ENCODE measurements at regions of chr16 and their contacts with region 1.

Region 1: GRCh38 chr16:67883872-67884261 is 818 bp upstream of the NRN1L start:
- DNase-seq: peak; percentile 62
- H3K4me3 ChIP-seq: no peak overlapping the region
- H3K27ac ChIP-seq: no peak overlapping the region
- H3K4me1 ChIP-seq: no peaks in the 10 kb centered on the region
- CTCF ChIP-seq: peak; percentile 92

Region 2: GRCh38 chr16:68064791-68065365 is 181.0 kb after region 1 on chr16:
- CTCF ChIA-PET with region 1: no interaction called
- POLR2A ChIA-PET with region 1: no interaction called
- intact Hi-C with region 1: loop called (anchors 5 kb)
- DNase-seq: peak; percentile 75
- H3K4me3 ChIP-seq: no peak overlapping the region
- H3K27ac ChIP-seq: no peak overlapping the region
- H3K4me1 ChIP-seq: peaks cover 9% of the 10 kb centered on the region
- CTCF ChIP-seq: peak; percentile 95